Panc1 (cell line): ENCODE measurements at regions of chr5 and their contacts with region 1.

Region 1: DNA sequence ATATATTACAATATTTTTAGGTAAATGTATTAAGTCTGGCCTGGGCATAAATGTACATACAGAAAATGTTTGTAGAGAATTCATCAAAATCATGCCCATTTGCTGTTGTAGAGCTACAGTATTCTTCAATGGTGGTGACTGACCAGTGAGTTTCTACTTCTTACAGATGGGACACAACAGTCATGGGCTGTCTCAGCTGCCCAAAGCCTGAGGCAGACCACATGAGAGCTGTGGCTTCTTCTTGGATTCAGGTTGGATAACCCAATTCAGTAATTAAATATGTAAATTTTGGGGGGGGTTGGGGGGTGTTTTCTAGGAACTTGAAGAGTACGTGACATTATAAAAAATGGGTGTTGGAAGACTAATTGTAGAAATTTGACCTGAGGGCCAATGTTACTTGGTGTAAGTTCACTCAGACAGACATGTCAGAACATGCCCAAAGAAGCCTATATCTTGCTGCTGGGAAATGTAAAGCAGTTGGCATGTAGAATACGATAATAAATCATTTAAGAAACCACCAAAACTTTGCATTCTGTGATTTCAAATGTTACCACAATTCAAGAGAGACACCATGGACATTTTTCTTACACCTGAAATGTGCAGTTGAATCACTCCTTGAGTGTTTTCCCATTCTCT is 17.9 kb downstream of the STARD4 start:
- DNase-seq: no peak
- ATAC-seq: no peak
- H3K4me3 ChIP-seq: no peak overlapping the region
- H3K27ac ChIP-seq: no peak overlapping the region
- H3K4me1 ChIP-seq: no peaks in the 10 kb centered on the region
- H3K27me3 ChIP-seq: no peaks in the 10 kb centered on the region
- CTCF ChIP-seq: no peak

Region 2: DNA sequence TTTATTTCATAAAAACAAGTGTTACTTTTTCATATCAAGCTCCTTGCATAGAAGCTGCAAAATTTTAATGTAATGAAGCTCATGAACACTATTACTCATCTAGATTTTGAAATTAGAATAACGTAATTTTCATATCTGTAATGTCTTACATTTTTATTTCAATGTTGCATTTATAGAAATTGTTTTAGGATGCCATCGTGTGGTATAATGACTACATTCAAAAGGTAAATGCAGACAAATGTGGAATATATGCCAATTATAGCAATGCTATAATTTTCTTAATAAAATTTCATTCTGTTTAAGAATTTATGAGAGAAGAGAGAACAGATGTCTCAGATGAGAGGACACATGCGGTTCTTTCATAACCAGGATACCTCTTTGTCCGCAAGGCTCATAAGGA is 998.2 kb before region 1 on chr5:
- CTCF ChIA-PET with region 1: no interaction called
- POLR2A ChIA-PET with region 1: no interaction called
- in situ Hi-C with region 1: no loop called
- intact Hi-C with region 1: no loop called
- DNase-seq: no peak
- ATAC-seq: no peak
- H3K4me3 ChIP-seq: no peak overlapping the region
- H3K27ac ChIP-seq: no peak overlapping the region
- H3K4me1 ChIP-seq: no peaks in the 10 kb centered on the region
- H3K27me3 ChIP-seq: no peaks in the 10 kb centered on the region
- CTCF ChIP-seq: no peak; the same call in 1 of the 2 replicates

Region 3: GRCh38 chr5:111211341-111211740 is 283.1 kb before region 1 on chr5:
- CTCF ChIA-PET with region 1: no interaction called
- POLR2A ChIA-PET with region 1: no interaction called
- in situ Hi-C with region 1: no loop called
- intact Hi-C with region 1: no loop called
- DNase-seq: no peak
- ATAC-seq: no peak
- H3K4me3 ChIP-seq: no peak overlapping the region
- H3K27ac ChIP-seq: no peak overlapping the region
- H3K4me1 ChIP-seq: no peaks in the 10 kb centered on the region
- H3K27me3 ChIP-seq: 0 out of 2 replicates have a peak, but pooled peaks cover 2% of the 10 kb centered on the region
- CTCF ChIP-seq: no peak

Region 4: GRCh38 chr5:111514087-111514486 is 19.6 kb after region 1 on chr5:
- CTCF ChIA-PET with region 1: no interaction called
- POLR2A ChIA-PET with region 1: interaction called, 29 read pairs
- in situ Hi-C with region 1: no loop called
- intact Hi-C with region 1: no loop called
- DNase-seq: no peak
- ATAC-seq: no peak
- H3K4me3 ChIP-seq: no peak overlapping the region
- H3K27ac ChIP-seq: peak overlapping the region; percentile 53; the same call in 1 of the 2 replicates
- H3K4me1 ChIP-seq: peaks cover 12% of the 10 kb centered on the region
- H3K27me3 ChIP-seq: no peaks in the 10 kb centered on the region; the same call in none of the 2 replicates
- CTCF ChIP-seq: no peak